Activated B cell treated with CpG ODN at 0.5 μM for 24 hours (primary cell): ENCODE measurements at regions of chr20 and their contacts with region 1.

Region 1: DNA sequence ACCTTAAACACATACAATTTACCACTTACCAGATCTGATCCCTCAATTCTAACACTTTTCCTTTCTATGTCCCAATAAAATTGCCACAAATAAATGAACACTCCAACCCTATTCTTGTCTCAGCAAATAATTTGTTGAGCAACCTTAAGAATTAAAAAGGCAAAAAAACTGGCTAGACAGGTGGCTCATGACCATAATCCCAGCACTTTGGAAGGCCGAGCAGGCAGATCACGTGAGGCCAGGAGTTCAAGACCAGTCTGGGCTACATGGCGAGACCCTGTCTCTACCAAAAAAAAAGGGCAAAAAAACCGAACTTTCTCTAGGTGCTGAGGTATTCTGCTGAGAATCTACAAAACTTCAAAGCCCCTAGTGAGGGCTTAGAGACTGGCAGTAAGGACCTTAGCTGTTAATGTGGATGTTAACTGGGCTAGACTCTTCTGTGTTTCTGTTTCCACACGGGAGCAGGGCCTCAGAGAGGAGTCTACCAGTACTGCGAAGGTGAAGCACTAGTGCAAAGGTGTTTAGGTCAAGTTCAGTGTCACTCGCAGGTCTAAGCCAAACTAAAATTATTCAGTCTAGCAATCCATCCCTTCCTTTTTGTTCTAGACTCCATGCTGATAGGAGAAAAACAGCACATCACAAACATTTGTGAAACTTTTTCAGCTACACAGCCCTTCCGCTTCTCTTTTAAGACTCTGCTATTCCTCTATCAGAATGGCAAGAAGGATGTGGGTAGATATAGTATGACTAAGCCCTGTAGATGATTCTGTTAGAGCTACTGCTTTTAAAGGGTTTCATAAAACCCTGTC is 2.6 kb downstream of the FASTKD5 start:
- DNase-seq: no peak
- ATAC-seq: peak; percentile 73
- H3K4me3 Mint-ChIP-seq: peak overlapping the region; percentile 70
- H3K27ac Mint-ChIP-seq: peak overlapping the region; percentile 80
- H3K4me1 Mint-ChIP-seq: peaks cover 62% of the 10 kb centered on the region
- H3K27me3 Mint-ChIP-seq: no peaks in the 10 kb centered on the region
- CTCF ChIP-seq: no peak

Region 2: DNA sequence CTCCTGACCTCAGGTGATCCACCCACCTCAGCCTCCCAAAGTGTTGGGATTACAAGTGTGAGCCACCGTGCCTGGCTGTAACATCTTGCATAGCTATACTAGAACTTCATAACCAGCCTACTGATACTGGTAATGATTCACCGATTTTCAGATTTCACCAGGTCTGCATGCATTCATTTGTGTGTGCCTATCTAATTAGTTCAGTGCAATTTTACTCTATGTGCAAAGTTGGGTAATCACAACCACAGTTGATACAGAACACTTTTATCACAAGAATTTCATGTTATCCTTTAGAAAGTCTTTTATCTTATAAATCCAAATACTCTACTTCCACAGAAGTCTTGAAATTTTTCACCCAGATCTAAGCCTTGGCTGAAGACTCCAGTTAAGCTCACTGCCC is 19.5 kb before region 1 on chr20:
- CTCF ChIA-PET with region 1: no interaction called
- POLR2A ChIA-PET with region 1: interaction called, 15 read pairs
- intact Hi-C with region 1: no loop called
- DNase-seq: no peak
- ATAC-seq: no peak
- H3K4me3 Mint-ChIP-seq: no peak overlapping the region
- H3K27ac Mint-ChIP-seq: no peak overlapping the region
- H3K4me1 Mint-ChIP-seq: no peaks in the 10 kb centered on the region
- H3K27me3 Mint-ChIP-seq: no peaks in the 10 kb centered on the region
- CTCF ChIP-seq: no peak

Region 3: DNA sequence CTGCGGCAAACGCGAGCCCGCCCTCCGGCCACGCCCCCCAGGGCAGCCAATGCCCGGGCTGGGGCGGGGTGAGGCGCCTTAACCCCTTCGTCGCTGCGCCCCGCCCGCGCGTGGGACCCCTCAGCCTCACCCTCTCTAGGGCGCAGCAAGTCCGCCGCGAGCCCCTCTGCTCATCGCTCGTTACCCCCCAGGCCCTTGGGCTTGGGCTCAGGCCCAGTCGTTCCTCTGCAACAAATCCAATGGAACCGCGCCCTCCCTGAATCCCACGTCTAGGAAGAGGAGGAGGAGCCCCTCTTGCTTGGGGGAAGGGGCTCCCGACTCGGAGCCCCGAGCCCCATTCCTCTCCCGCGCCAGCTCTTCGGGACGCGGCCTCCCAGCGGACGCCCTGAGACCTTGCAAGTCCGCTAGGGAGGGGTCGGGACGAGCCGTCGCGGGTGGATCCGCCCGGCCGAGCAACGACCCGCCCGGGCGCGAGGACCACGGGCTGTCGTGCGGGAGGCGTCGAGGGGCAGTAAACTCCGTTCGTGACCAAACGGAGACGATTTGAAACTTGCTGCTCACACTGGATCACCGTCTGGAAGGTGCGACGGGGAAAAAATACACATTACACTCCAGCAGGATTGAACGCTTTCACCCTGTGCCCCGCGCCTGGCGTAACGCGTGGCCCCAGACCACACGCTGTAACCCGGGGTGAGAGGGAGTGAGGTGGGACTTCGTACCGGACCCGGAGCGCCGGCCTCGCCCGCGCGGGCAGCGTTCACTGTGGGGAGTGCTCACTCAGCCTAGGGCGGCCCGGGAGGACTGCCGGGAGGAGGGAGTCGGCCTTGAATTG is 16.8 kb after region 1 on chr20:
- CTCF ChIA-PET with region 1: no interaction called
- POLR2A ChIA-PET with region 1: interaction called, 4 read pairs
- intact Hi-C with region 1: loop called (anchors 1 kb)
- DNase-seq: peak; percentile 93
- ATAC-seq: peak; percentile 32
- H3K4me3 Mint-ChIP-seq: peak overlapping the region; percentile 82
- H3K27ac Mint-ChIP-seq: no peak overlapping the region
- H3K4me1 Mint-ChIP-seq: peaks cover 16% of the 10 kb centered on the region
- H3K27me3 Mint-ChIP-seq: peaks cover 30% of the 10 kb centered on the region
- CTCF ChIP-seq: no peak

Region 4: DNA sequence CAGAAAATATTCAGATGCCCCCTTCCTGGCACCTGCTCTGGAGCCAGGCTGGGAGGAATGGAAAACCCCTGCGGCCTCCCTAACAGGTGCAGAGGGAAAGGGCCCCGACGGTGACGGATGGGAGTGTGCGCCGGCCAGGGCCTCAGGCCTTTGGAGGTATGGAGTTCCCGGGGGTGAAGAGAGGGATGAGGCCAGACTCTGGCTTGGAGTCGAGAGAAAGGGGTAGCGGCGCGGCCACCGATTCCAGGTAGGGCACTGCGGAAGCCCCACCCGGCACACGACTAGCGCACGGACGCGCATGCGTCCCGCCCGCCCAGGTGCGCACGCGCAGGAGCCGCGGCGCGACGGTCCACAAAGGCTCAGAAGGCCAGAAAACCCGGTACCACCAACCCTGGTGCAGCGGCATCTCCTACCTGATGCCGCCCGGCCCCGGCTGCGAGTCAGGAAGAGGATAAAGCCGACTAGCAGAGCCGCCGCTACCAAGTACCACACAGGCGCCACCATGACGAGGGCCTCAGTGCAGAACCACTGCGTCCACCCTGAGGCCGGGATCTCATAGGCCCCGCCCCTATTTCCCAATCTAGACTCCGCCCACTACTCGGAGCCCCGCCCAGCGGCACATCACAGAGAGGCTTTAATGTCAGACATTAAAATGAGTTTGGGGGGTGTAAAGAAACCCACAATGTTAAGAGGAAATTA is 47.3 kb after region 1 on chr20 and contains the start of gene DDRGK1:
- CTCF ChIA-PET with region 1: no interaction called
- POLR2A ChIA-PET with region 1: interaction called, 9 read pairs
- intact Hi-C with region 1: loop called (anchors 5 kb)
- DNase-seq: peak; percentile 93
- ATAC-seq: peak; percentile 93
- H3K4me3 Mint-ChIP-seq: peak within 1 kb of the TSS; percentile 97
- H3K27ac Mint-ChIP-seq: peak within 1 kb of the TSS; percentile 94
- H3K4me1 Mint-ChIP-seq: peaks cover 22% of the 10 kb centered on the region
- H3K27me3 Mint-ChIP-seq: no peaks in the 10 kb centered on the region
- CTCF ChIP-seq: no peak
- total RNA-seq, gene DDRGK1: 37.1 and 46.1 TPM in 2 replicates